Activated CD4-positive, alpha-beta memory T cell treated with anti-CD3 and anti-CD28 coated beads for 36 hours (primary cell): ENCODE measurements at regions of chr2 and their contacts with region 1.

Region 1: GRCh38 chr2:37635504-37636380 is 35.7 kb downstream of the CDC42EP3 start:
- DNase-seq: peak; percentile 87
- H3K4me3 Mint-ChIP-seq: peak overlapping the region; percentile 38
- H3K27ac Mint-ChIP-seq: peak overlapping the region; percentile 94
- H3K4me1 Mint-ChIP-seq: peaks cover 65% of the 10 kb centered on the region
- H3K27me3 Mint-ChIP-seq: no peaks in the 10 kb centered on the region

Region 2: GRCh38 chr2:37561615-37562569 is 73.8 kb before region 1 on chr2:
- CTCF ChIA-PET with region 1: no interaction called
- POLR2A ChIA-PET with region 1: no interaction called
- intact Hi-C with region 1: loop called (anchors 2 kb)
- DNase-seq: peak; percentile 68
- H3K4me3 Mint-ChIP-seq: no peak overlapping the region
- H3K27ac Mint-ChIP-seq: peak overlapping the region; percentile 40
- H3K4me1 Mint-ChIP-seq: peaks cover 21% of the 10 kb centered on the region
- H3K27me3 Mint-ChIP-seq: no peaks in the 10 kb centered on the region

Region 3: GRCh38 chr2:37585982-37586621 is 49.6 kb before region 1 on chr2:
- CTCF ChIA-PET with region 1: interaction called, 3 read pairs
- POLR2A ChIA-PET with region 1: no interaction called
- intact Hi-C with region 1: loop called (anchors 1 kb)
- DNase-seq: peak; percentile 85
- H3K4me3 Mint-ChIP-seq: peak overlapping the region; percentile 56
- H3K27ac Mint-ChIP-seq: peak overlapping the region; percentile 92
- H3K4me1 Mint-ChIP-seq: peaks cover 91% of the 10 kb centered on the region
- H3K27me3 Mint-ChIP-seq: no peaks in the 10 kb centered on the region

Region 4: DNA sequence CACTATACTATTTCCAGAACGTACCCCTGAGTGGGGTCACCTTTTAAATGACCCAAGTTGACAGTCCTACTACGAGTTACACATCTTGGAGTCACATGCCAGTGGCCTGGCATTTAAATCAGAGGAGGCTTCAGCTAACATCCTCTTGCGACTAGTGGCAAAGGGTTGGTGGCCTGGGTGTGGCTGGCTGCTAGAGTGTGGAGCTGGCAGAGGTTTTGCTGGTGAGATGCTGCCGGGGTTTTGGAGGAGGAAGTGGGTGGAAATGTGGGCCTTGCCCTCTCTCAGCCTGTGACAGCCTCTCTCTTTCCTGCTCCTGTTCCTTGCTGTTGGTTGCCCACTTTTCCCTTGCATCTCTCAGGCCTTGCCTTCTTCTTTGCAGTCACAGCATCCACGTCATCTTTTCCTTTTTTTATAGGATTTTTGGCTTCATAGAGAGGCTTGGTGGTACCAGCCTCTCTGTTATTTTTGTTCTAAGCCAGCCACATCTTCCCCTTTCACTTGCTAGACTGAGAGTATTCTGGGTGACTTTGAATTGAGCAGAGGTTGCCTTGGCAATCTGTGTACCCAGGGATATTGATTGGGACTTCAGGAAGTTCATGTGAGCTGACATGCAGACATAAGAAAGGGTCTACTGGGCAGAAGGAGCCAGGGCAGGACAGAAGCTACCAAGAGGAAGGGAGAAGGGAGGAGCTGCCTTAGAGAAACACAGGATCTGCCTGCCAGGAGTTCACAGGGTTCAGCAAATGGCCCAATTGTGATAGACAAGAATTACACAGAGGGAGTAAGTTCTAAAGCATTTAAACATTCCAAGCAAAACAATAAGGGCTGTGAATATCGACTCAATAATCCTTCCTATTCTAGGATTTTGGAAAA is 19.7 kb before region 1 on chr2:
- CTCF ChIA-PET with region 1: no interaction called
- POLR2A ChIA-PET with region 1: no interaction called
- intact Hi-C with region 1: loop called (anchors 2 kb)
- DNase-seq: peak; percentile 72
- H3K4me3 Mint-ChIP-seq: no peak overlapping the region
- H3K27ac Mint-ChIP-seq: peak overlapping the region; percentile 77
- H3K4me1 Mint-ChIP-seq: peaks cover 63% of the 10 kb centered on the region
- H3K27me3 Mint-ChIP-seq: no peaks in the 10 kb centered on the region

Region 5: DNA sequence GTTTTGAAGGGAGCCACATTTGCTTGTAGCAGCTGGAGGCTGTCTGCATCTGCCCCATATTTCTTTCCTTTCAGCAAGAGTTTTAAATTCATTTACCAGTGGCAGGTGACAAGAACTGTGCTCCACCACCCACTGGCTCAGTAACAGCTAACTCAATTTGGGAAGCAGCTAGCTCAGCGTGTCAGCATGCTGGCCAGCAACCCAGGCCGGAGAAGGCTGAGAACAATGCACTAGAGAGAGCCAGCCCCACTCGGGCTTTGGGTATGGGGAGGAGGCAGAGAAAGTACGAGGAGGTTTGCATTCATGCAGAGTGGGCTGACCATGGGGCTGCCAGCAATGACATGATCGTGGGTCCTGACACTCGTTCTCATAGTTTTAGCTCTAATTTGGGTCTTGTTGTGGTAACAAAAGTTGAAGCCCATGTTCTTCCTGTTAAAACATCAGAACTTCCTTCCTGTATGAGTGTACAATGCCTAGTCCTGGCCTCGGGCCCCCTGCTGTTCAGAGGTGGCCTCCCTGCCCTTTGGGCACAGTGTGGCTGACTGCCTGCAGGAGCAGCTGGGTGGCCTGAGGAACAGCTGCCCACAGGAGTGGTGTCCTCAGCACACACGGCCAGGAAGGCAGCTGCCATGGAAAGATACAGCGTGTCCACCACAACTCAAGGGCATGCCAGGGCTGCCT is 12.7 kb after region 1 on chr2:
- CTCF ChIA-PET with region 1: interaction called, 3 read pairs
- POLR2A ChIA-PET with region 1: interaction called, 3 read pairs
- intact Hi-C with region 1: loop called (anchors 1 kb)
- DNase-seq: peak; percentile 74
- H3K4me3 Mint-ChIP-seq: peak overlapping the region; percentile 30
- H3K27ac Mint-ChIP-seq: peak overlapping the region; percentile 94
- H3K4me1 Mint-ChIP-seq: peaks cover 93% of the 10 kb centered on the region
- H3K27me3 Mint-ChIP-seq: no peaks in the 10 kb centered on the region

Region 6: GRCh38 chr2:37672104-37672869 is 36.5 kb after region 1 on chr2:
- CTCF ChIA-PET with region 1: no interaction called
- POLR2A ChIA-PET with region 1: interaction called, 5 read pairs
- intact Hi-C with region 1: loop called (anchors 1 kb)
- DNase-seq: peak; percentile 78
- H3K4me3 Mint-ChIP-seq: peak overlapping the region; percentile 95
- H3K27ac Mint-ChIP-seq: peak overlapping the region; percentile 80
- H3K4me1 Mint-ChIP-seq: peaks cover 39% of the 10 kb centered on the region
- H3K27me3 Mint-ChIP-seq: no peaks in the 10 kb centered on the region

Region 7: GRCh38 chr2:37692711-37693110 is 57.0 kb after region 1 on chr2:
- CTCF ChIA-PET with region 1: no interaction called
- POLR2A ChIA-PET with region 1: no interaction called
- intact Hi-C with region 1: no loop called
- DNase-seq: no peak
- H3K4me3 Mint-ChIP-seq: no peak overlapping the region
- H3K27ac Mint-ChIP-seq: no peak overlapping the region
- H3K4me1 Mint-ChIP-seq: peaks cover 4% of the 10 kb centered on the region
- H3K27me3 Mint-ChIP-seq: no peaks in the 10 kb centered on the region

Region 8: DNA sequence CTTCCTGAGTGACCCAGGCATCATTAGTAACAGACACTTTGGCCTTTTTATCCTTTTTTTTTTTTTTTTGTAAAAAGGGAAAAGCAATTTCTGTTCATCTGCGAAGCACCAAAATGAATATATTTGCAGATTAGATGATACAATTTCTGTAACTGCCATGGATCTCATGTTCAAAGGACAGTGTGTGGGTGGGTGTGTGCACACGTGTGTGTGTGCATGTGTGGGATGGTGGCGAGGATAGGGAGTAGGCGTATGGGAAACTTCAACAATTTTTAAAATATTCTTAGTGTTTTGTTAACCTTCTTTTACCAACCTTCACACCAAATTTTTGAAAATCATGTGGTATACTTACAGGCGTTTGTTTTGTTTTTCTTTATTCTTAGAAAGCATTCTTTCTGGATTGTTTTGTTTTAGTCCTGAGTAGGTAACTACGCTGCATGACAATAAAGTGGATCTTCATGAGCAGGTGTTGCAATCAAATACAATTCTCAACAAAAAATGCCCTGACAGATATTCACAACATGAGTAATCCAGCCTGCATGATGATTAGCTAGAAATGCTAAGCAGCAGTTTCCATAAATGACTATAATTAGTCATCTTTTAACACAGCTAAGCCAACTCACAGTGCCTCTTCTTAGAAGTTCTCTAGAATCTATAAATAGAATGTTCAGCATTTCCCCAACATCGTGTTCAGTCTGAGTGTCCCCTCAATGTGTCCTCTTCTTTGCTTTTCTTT is 235.9 kb after region 1 on chr2:
- CTCF ChIA-PET with region 1: no interaction called
- POLR2A ChIA-PET with region 1: no interaction called
- intact Hi-C with region 1: loop called (anchors 1 kb)
- DNase-seq: no peak
- H3K4me3 Mint-ChIP-seq: peak overlapping the region; percentile 38
- H3K27ac Mint-ChIP-seq: peak overlapping the region; percentile 93
- H3K4me1 Mint-ChIP-seq: peaks cover 27% of the 10 kb centered on the region
- H3K27me3 Mint-ChIP-seq: no peaks in the 10 kb centered on the region